Esophagus squamous epithelium (tissue), 5 donors: ENCODE measurements at regions of chr6 and their contacts with region 1.

Region 1: DNA sequence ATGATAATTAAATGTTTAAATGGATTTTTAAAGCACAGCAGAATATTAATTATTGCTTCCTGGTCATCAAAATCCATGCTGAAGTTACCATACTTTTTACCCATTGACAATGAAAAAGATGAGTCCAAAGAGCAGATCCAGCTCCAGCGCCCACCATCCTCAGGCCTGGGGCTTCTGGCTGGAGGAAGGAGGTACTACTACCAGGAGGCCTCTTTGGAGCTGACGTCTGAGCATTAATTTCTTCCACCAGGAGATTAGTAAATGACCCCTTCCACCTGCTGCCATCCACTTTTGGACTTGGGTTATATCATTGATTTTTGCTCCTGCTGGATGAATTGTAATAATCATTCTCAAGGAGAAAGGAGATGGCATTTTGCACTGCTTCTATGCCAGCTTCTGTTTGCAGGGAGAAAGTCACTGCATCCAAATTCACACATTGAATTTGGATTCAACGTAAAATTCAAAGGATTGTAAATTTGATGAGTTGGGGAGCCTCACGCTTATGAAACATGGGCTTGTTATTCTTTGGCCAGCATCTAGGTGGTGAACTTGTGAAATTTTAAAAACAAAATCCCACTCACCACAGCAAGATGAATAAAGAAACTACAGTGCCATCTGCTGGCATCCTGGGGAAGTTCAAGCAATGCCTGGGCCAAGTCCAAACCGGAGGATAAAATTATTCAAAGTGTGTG is 121.8 kb downstream of the SASH1 start:
- DNase-seq: no peak
- H3K4me3 ChIP-seq: no peak overlapping the region
- H3K27ac ChIP-seq: peak overlapping the region in 3 of 4 donors; percentile 19 to 67 (median 41)
- H3K4me1 ChIP-seq: peaks cover 4 to 63% (median 15%) of the 10 kb centered on the region in 3 donors
- H3K27me3 ChIP-seq: no peaks in the 10 kb centered on the region
- CTCF ChIP-seq: peak; percentile 84 to 96 (median 92)
- POLR2A ChIP-seq: no peak

Region 2: DNA sequence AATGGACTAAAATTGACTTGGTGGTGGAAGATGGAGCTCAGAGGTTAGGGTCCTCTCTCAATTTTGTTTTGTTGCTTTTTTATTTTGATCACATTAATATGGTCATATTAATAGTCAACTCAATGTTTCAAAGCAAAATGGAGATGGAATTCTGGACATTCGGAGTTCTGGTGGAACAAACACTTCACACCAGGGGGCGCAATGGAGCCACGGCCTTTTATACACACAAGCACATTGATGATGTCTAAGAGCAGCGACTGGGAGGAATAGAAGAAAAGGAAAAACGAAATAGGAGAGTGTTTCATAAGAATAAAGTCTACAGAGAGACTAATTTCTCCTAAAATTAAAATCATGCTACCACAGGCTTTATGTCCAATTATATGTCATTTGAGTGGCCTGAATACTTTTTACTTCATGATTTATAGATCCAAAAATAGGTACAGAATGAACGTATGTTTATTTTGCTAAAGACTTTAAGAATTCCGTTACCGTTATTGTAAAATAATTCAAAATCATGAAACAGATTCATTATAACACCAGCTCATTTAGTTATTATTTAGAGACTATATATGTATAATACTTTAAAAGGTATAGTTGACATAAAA is 319.4 kb before region 1 on chr6:
- intact Hi-C with region 1: no loop called
- DNase-seq: no peak
- H3K4me3 ChIP-seq: peak overlapping the region in 1 of 4 donors; percentile 22
- H3K27ac ChIP-seq: no peak overlapping the region
- H3K4me1 ChIP-seq: no peaks in the 10 kb centered on the region
- H3K27me3 ChIP-seq: no peaks in the 10 kb centered on the region
- CTCF ChIP-seq: peak; percentile 12 to 80 (median 68)
- POLR2A ChIP-seq: no peak

Region 3: DNA sequence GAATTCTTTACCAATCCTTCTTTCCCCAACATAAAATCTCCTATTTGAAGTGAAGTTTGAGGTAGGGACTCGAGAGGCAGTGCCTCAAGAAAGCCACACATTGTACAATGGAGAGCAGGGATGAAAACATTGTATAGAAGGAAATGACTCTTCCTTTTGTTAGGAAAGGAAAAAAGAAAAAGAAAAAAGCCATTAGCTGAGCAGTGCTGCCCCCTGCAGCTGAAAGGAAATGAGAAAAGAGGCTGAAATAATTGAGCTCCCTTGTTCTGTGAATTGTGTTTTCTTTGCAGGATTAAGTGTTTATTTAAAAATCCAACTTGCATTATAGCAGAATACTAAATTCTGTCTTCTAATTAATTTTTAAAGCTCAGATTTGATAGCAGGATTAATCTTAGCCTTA is 284.7 kb before region 1 on chr6:
- intact Hi-C with region 1: loop called (anchors 5 kb)
- DNase-seq: no peak
- H3K4me3 ChIP-seq: no peak overlapping the region
- H3K27ac ChIP-seq: no peak overlapping the region
- H3K4me1 ChIP-seq: peaks cover 0 to 13% (median 0%) of the 10 kb centered on the region in 3 donors
- H3K27me3 ChIP-seq: no peaks in the 10 kb centered on the region
- CTCF ChIP-seq: peak; percentile 25 to 71 (median 45)
- POLR2A ChIP-seq: no peak

Region 4: DNA sequence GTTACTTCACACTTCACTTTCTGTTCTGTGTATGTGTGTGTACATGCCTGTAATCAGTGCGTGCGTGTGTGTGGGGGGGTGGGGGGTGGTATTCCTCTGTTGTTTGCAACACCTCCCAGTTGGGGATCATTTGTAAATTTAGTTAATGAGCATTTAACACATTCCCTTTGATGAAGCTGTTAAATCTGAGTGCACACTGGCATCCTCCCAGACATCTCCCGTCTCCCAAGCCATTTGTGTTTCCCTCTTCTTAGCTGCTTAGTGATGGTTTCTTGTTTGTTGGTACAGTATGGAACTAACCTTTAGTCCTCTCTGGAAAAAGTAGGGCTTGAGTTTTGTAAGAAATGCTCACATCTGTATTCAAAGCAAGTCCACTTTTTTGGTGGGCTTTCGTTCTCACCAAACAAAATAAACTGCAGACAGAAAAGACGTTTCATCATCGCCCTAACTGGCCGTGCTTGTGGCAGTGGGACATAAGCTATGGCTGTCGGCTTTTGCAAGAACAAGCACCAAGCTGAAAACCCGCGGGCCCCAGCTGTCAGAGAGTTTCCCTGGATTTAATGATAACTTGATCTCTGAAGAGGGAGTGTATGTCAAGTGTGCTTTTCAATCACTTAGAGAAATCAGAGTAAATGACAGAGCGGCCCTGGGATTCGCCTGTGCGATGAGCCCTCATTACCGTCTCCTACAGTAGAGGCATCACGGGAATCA is 176.7 kb before region 1 on chr6:
- intact Hi-C with region 1: loop called (anchors 10 kb)
- DNase-seq: no peak
- H3K4me3 ChIP-seq: no peak overlapping the region
- H3K27ac ChIP-seq: no peak overlapping the region
- H3K4me1 ChIP-seq: peaks cover 0 to 6% (median 0%) of the 10 kb centered on the region in 3 donors
- H3K27me3 ChIP-seq: no peaks in the 10 kb centered on the region
- CTCF ChIP-seq: no peak
- POLR2A ChIP-seq: no peak